CD8-positive, alpha-beta T cell (primary cell): ENCODE measurements at regions of chr19 and their contacts with region 1.

Region 1: GRCh38 chr19:47081111-47081510 is 32.5 kb downstream of the ZC3H4 start:
- DNase-seq: no peak
- ATAC-seq: no peak
- H3K4me3 ChIP-seq: no peak overlapping the region
- H3K4me3 Mint-ChIP-seq: no peak overlapping the region
- H3K27ac ChIP-seq: no peak overlapping the region
- H3K27ac Mint-ChIP-seq: no peak overlapping the region
- H3K4me1 ChIP-seq: no peaks in the 10 kb centered on the region
- H3K4me1 Mint-ChIP-seq: no peaks in the 10 kb centered on the region
- H3K27me3 ChIP-seq: no peaks in the 10 kb centered on the region
- H3K27me3 Mint-ChIP-seq: no peaks in the 10 kb centered on the region
- CTCF ChIP-seq: no peak

Region 2: GRCh38 chr19:46423188-46423587 is 657.9 kb before region 1 on chr19:
- CTCF ChIA-PET with region 1: no interaction called
- POLR2A ChIA-PET with region 1: no interaction called
- intact Hi-C with region 1: no loop called
- DNase-seq: no peak
- ATAC-seq: no peak
- H3K4me3 ChIP-seq: no peak overlapping the region
- H3K4me3 Mint-ChIP-seq: no peak overlapping the region
- H3K27ac ChIP-seq: no peak overlapping the region
- H3K27ac Mint-ChIP-seq: no peak overlapping the region
- H3K4me1 ChIP-seq: peaks cover 2% of the 10 kb centered on the region
- H3K4me1 Mint-ChIP-seq: peaks cover 17% of the 10 kb centered on the region
- H3K27me3 ChIP-seq: peaks cover 7 to 14% of the 10 kb centered on the region in 2 experiments
- H3K27me3 Mint-ChIP-seq: peaks cover 41% of the 10 kb centered on the region
- CTCF ChIP-seq: no peak

Region 3: GRCh38 chr19:47063874-47064273 is 17.2 kb before region 1 on chr19:
- CTCF ChIA-PET with region 1: interaction called, 16 read pairs
- POLR2A ChIA-PET with region 1: no interaction called
- intact Hi-C with region 1: no loop called
- DNase-seq: no peak
- ATAC-seq: no peak
- H3K4me3 ChIP-seq: no peak overlapping the region
- H3K4me3 Mint-ChIP-seq: no peak overlapping the region
- H3K27ac ChIP-seq: no peak overlapping the region
- H3K27ac Mint-ChIP-seq: no peak overlapping the region
- H3K4me1 ChIP-seq: no peaks in the 10 kb centered on the region
- H3K4me1 Mint-ChIP-seq: no peaks in the 10 kb centered on the region
- H3K27me3 ChIP-seq: no peaks in the 10 kb centered on the region
- H3K27me3 Mint-ChIP-seq: no peaks in the 10 kb centered on the region
- CTCF ChIP-seq: no peak

Region 4: DNA sequence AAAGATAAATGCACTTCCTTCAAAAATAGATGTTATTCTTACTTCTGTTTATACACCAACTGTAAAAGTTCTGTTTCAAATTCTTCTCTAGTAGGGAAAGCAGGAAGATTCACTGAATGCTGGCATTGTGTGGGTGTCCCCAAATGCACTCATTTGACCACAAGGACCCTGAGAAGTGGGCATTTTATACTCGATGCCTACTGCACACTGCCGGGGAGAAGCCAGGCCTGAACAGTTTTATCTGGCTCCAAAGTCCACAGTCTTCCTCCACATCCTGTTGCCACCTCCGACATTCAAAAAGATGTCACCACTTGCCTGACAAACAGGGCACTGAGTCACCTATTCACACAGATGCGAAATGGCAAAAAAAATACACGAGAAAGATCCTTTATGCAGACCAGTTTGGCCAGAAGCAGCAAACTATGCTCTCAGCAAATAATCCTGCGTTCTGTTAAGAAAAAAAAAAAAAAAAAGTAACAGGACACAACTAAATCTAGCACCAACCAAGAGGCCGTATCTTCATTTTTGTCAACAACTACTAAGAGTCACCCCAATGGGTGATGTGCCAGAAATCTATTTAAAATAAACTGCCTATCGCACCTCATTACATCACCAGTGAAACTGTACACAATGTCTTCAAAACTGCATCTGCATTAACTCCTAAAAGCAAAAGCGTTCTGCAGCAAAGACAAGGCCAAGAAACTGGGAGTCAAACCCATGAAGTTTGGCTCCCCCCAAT is 26.3 kb after region 1 on chr19:
- CTCF ChIA-PET with region 1: interaction called, 38 read pairs
- POLR2A ChIA-PET with region 1: interaction called, 3 read pairs
- intact Hi-C with region 1: loop called in 1 of 2 experiments (anchors 1 kb)
- DNase-seq: peak in 8 of 9 experiments; percentile 29 to 71 (median 48)
- ATAC-seq: peak; percentile 32
- H3K4me3 ChIP-seq: no peak overlapping the region
- H3K4me3 Mint-ChIP-seq: peak overlapping the region; percentile 36
- H3K27ac ChIP-seq: peak overlapping the region; percentile 30 to 99
- H3K27ac Mint-ChIP-seq: peak overlapping the region; percentile 83
- H3K4me1 ChIP-seq: peaks cover 43% of the 10 kb centered on the region
- H3K4me1 Mint-ChIP-seq: peaks cover 68% of the 10 kb centered on the region
- H3K27me3 ChIP-seq: no peaks in the 10 kb centered on the region
- H3K27me3 Mint-ChIP-seq: no peaks in the 10 kb centered on the region
- CTCF ChIP-seq: no peak

Region 5: DNA sequence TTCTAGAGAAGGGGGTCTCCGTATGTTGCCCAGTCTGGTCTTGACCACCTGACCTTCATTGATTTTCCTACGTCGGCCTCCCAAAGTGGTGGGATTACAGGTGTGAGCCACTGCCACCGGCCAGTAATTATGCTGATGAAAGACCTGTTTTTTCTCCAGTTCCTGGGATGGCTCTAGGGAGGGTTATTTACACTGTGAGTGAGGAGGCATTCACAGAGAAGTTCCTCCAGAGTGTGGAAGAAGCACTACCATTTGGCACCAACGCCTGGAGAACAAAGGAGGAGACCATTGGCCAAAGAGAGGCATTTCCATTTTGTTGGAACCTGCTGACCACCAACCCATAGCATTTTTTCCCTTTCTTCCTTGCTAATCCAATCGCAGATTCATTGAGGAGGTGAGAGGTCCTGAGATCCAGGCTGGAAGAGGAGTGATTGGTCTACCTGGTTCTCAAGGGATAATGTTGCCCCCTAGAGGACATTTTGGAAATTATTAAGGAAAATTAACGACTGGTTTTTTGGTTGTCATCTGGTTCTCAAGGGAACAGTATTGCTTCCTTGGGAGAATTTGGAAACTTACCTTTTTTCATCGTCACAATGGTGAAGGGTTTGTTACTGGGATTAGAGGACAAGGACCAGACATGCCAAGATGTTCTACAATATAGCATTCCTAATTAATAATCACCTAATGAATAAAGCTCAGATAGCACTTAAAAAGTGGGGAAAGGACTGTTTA is 44.0 kb after region 1 on chr19:
- CTCF ChIA-PET with region 1: interaction called, 95 read pairs
- POLR2A ChIA-PET with region 1: no interaction called
- intact Hi-C with region 1: loop called (anchors 1 kb)
- DNase-seq: peak in 4 of 9 experiments; percentile 11 to 79 (median 64)
- ATAC-seq: peak; percentile 55
- H3K4me3 ChIP-seq: no peak overlapping the region
- H3K4me3 Mint-ChIP-seq: no peak overlapping the region
- H3K27ac ChIP-seq: no peak overlapping the region
- H3K27ac Mint-ChIP-seq: no peak overlapping the region
- H3K4me1 ChIP-seq: peaks cover 2% of the 10 kb centered on the region
- H3K4me1 Mint-ChIP-seq: peaks cover 5% of the 10 kb centered on the region
- H3K27me3 ChIP-seq: no peaks in the 10 kb centered on the region
- H3K27me3 Mint-ChIP-seq: no peaks in the 10 kb centered on the region
- CTCF ChIP-seq: peak; percentile 75

Region 6: DNA sequence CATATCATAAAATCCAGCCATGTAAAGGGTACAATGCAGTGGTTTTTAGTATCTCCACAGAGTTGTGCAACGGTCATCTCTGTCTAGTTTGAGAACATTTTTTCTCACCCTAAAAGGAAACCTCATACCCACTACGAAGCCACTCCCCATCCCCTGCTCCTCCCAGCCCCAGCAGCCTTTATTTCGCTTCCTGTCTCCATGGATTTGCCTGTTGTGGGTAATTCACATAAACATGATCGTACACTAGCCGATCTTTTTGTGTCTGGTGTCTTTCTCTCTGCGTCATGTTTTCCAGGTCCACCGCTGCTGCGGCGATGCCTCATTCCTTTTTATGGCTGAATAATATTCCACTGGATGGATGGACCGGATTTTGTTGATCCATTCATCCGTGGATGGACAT is 556.4 kb after region 1 on chr19:
- CTCF ChIA-PET with region 1: no interaction called
- POLR2A ChIA-PET with region 1: no interaction called
- intact Hi-C with region 1: no loop called
- DNase-seq: no peak
- ATAC-seq: no peak
- H3K4me3 ChIP-seq: no peak overlapping the region
- H3K4me3 Mint-ChIP-seq: no peak overlapping the region
- H3K27ac ChIP-seq: no peak overlapping the region
- H3K27ac Mint-ChIP-seq: no peak overlapping the region
- H3K4me1 ChIP-seq: peaks cover 7% of the 10 kb centered on the region
- H3K4me1 Mint-ChIP-seq: peaks cover 32% of the 10 kb centered on the region
- H3K27me3 ChIP-seq: no peaks in the 10 kb centered on the region
- H3K27me3 Mint-ChIP-seq: no peaks in the 10 kb centered on the region
- CTCF ChIP-seq: no peak